Activated T-helper 2 cell treated with anti-CD3 and anti-CD28 coated beads, Interferon-gamma antibody, Interleukin-2, Interleukin-4, amounts not matched to agents 10 μg/mL and 5 μg/mL and 100 μg/mL, durations not matched to agents 14 hours and 24 hours and 36 hours (primary cell): ENCODE measurements at regions of chr2 and their contacts with region 1.

Region 1: DNA sequence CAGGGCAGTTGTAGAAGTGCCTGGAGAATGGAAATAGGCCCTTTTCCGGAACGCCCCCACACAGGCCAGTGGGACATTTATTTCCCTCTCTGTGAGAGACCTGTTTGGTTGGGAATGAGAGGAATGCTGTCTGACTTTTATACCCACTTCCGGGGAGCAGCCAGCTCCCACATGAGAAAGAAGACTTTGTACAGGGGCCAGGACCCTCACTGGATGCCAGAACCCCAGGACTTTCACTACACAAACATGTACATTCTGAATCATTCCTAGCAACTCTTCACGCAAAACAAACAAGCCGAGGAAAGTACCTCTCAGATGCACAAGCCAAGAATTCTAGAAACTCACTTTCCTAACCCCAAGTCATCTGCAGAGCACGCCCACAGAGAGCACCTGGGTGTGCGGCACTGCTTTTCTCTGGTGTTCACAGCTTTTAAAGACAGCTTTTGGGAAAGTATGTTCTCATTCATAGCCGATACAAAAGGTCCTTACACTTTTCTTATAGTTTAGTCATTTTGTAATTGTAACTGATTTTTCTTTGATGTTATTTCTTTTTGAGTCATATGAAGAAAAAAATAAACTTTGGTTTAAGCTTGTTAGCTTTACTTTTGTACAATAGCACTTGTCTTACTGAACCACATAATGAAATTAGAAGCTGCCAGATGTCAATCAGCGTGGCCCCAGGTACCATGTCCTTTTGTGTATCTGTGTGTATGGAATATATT is 856.1 kb upstream of the ID2 start:
- DNase-seq: peak; percentile 46
- H3K4me3 Mint-ChIP-seq: peak overlapping the region; percentile 31
- H3K27ac Mint-ChIP-seq: peak overlapping the region; percentile 94
- H3K4me1 Mint-ChIP-seq: peaks cover 43% of the 10 kb centered on the region
- H3K27me3 Mint-ChIP-seq: no peaks in the 10 kb centered on the region

Region 2: GRCh38 chr2:7427293-7428060 is 398.3 kb before region 1 on chr2:
- intact Hi-C with region 1: loop called (anchors 1 kb)
- DNase-seq: no peak
- H3K4me3 Mint-ChIP-seq: peak overlapping the region; percentile 49
- H3K27ac Mint-ChIP-seq: peak overlapping the region; percentile 78
- H3K4me1 Mint-ChIP-seq: peaks cover 45% of the 10 kb centered on the region
- H3K27me3 Mint-ChIP-seq: no peaks in the 10 kb centered on the region

Region 3: GRCh38 chr2:7523481-7524120 is 302.2 kb before region 1 on chr2:
- intact Hi-C with region 1: loop called (anchors 5 kb)
- DNase-seq: no peak
- H3K4me3 Mint-ChIP-seq: peak overlapping the region; percentile 46
- H3K27ac Mint-ChIP-seq: peak overlapping the region; percentile 88
- H3K4me1 Mint-ChIP-seq: peaks cover 69% of the 10 kb centered on the region
- H3K27me3 Mint-ChIP-seq: no peaks in the 10 kb centered on the region

Region 4: DNA sequence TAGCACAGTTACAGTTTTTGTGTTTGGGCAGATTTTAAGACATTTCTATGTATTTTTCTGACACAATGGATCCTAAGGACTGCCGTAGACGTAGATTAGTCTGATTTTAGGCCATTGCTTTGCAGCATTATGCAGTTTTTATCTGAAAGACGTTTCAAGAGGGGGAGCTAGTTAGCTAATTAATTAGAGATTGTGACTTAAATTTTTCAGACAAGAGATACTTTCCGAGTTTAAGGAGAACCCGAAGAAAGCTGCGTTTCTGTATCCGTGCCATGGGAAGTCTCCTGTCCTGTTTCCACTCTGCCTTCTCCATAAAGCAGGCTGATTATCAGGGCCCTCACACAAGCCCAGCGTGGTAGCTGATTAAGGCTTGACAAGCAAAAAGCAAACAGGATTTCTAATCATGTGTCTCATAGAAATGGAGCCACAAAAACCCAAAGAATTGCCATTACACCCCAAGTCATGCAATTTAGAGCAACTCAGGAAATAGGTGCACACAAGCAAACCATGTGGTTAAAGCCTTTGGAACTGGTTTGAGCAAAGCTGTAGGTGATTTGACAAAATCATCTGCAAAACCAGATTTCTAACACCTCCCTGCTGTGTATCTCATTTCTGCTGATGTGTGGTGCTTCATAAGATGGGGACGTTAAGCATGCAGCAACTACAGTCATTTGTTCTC is 100.4 kb before region 1 on chr2:
- intact Hi-C with region 1: loop called (anchors 1 kb)
- DNase-seq: peak; percentile 51
- H3K4me3 Mint-ChIP-seq: peak overlapping the region; percentile 89
- H3K27ac Mint-ChIP-seq: peak overlapping the region; percentile 90
- H3K4me1 Mint-ChIP-seq: peaks cover 58% of the 10 kb centered on the region
- H3K27me3 Mint-ChIP-seq: no peaks in the 10 kb centered on the region

Region 5: GRCh38 chr2:7845332-7845731 is 19.6 kb after region 1 on chr2:
- intact Hi-C with region 1: loop called (anchors 1 kb)
- DNase-seq: no peak
- H3K4me3 Mint-ChIP-seq: no peak overlapping the region
- H3K27ac Mint-ChIP-seq: peak overlapping the region; percentile 81
- H3K4me1 Mint-ChIP-seq: peaks cover 64% of the 10 kb centered on the region
- H3K27me3 Mint-ChIP-seq: no peaks in the 10 kb centered on the region

Region 6: GRCh38 chr2:8049851-8050571 is 224.3 kb after region 1 on chr2:
- intact Hi-C with region 1: loop called (anchors 1 kb)
- DNase-seq: peak; percentile 63
- H3K4me3 Mint-ChIP-seq: peak overlapping the region; percentile 30
- H3K27ac Mint-ChIP-seq: peak overlapping the region; percentile 86
- H3K4me1 Mint-ChIP-seq: peaks cover 53% of the 10 kb centered on the region
- H3K27me3 Mint-ChIP-seq: no peaks in the 10 kb centered on the region

Region 7: DNA sequence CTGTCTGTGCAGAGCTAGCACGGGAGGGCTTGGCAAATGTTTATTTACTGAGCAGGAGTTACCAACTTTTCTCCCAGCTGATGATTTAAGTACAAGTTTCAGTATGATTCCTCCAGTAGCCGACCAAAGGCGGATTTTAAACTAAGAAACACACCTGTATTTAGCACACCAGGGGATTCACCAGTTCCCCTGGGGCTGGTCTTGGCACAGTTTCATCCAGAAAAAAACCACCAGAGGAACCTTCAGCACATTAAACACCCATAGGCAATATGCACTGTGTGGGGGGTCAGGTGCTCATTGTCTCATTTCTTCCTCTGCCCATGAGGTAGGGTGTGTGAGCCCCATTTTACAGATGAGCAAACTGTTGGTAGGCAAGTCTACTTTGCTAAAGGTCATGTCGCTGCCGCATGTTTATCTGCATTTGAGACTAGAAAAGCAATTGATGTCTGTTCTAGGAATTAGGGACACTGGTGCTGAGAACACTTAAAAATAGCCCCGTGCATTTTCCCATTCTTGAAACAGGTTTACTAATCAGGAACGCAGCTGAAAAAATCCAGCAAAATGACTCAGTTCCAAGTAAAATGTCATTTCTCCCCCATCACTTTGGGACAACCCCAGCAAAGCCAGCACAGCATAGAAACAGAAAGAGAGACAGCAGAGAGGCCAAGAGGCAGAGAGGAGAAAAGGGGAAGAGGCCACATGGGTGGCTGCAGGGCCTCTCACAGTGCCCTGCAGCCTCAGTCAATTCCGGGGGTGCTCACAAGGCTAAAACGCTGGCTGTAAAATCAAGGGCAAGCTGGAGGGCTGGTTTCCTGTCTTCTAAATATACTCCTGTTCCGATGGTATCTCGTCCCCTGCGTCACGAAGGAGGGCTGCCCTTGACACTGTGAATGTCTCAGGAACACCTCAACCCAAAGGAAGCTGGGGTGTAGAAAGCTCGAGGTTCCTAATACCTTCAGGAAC is 689.3 kb after region 1 on chr2:
- intact Hi-C with region 1: loop called (anchors 1 kb)
- DNase-seq: peak; percentile 58
- H3K4me3 Mint-ChIP-seq: peak overlapping the region; percentile 45
- H3K27ac Mint-ChIP-seq: peak overlapping the region; percentile 97
- H3K4me1 Mint-ChIP-seq: peaks cover 60% of the 10 kb centered on the region
- H3K27me3 Mint-ChIP-seq: no peaks in the 10 kb centered on the region